Panc1 (cell line): ENCODE measurements at regions of chr16 and their contacts with region 1.

Region 1: DNA sequence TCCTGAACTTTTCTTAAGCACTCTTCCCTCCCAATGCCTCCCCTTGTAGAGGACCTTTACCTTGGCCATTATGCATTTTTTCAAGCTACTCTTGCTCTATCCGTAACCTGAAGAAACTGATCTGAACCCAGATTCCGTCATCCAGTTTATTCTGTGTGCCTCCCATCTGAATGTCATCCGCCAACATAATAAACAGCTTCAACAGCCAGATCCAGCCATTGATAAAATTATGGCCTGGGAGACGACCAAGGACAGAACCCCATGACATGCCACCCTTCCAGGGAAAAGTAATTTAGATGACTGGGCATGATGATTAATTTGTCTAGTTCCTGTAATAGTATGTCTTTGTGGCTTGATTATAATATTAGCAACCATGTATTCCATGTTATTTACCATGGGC is 41.9 kb downstream of the KATNIP start:
- DNase-seq: no peak
- ATAC-seq: no peak
- H3K4me3 ChIP-seq: no peak overlapping the region
- H3K27ac ChIP-seq: no peak overlapping the region
- H3K4me1 ChIP-seq: no peaks in the 10 kb centered on the region
- H3K27me3 ChIP-seq: no peaks in the 10 kb centered on the region
- CTCF ChIP-seq: no peak

Region 2: GRCh38 chr16:27611340-27611739 is 19.5 kb after region 1 on chr16:
- CTCF ChIA-PET with region 1: no interaction called
- POLR2A ChIA-PET with region 1: no interaction called
- in situ Hi-C with region 1: no loop called
- intact Hi-C with region 1: no loop called
- DNase-seq: no peak
- ATAC-seq: no peak
- H3K4me3 ChIP-seq: no peak overlapping the region
- H3K27ac ChIP-seq: no peak overlapping the region
- H3K4me1 ChIP-seq: no peaks in the 10 kb centered on the region
- H3K27me3 ChIP-seq: no peaks in the 10 kb centered on the region
- CTCF ChIP-seq: no peak

Region 3: GRCh38 chr16:27822995-27823394 is 231.2 kb after region 1 on chr16:
- CTCF ChIA-PET with region 1: interaction called, 12 read pairs
- POLR2A ChIA-PET with region 1: no interaction called
- in situ Hi-C with region 1: no loop called
- intact Hi-C with region 1: no loop called
- DNase-seq: no peak
- ATAC-seq: no peak
- H3K4me3 ChIP-seq: no peak overlapping the region
- H3K27ac ChIP-seq: no peak overlapping the region
- H3K4me1 ChIP-seq: no peaks in the 10 kb centered on the region
- H3K27me3 ChIP-seq: peaks cover 17% of the 10 kb centered on the region
- CTCF ChIP-seq: no peak